Activated naive CD4-positive, alpha-beta T cell treated with anti-CD3 and anti-CD28 coated beads for 36 hours (primary cell): ENCODE measurements at regions of chr11 and their contacts with region 1.

Region 1: DNA sequence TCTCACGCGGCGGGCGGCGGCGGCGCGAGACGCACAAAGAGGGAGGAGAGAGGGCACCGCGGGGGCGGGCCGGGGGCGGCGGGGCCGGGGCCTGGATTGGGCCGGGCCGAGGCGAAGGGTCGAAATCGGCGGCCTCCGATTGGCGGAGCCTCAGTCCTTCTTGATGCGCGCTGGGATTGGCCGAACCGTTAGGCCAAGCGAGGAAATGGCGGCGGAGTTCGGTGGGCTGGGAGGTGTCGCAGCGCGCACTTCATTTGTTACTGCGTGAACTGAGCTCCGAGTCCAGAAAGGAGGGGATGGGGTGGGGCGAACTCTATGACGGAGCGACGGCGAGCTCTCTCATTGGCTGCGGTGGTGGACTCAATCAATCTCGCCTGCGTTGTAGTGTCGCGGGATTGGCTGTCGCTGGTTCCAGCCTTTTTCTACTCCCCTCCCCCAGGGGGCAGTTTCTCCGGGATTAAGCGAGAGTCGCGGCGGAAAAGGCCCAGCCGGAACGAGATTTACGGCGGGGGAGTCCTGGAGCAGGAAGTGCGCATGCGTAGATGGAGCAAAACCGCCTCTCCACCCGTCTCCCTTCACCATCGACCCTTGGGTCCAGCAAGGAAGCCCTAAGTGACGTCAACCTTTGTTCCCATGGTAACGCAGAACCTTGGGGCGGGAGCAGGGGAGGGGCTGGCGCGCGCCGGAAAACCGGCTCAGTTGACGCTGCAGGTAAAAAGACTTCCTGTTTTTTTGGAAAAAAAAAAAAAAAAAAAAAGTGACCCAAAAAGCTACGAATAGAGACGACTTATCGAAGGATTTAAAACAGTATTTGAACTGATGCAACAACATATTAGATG is at the start of gene SF1:
- DNase-seq: peak; percentile 100
- H3K4me3 Mint-ChIP-seq: peak within 1 kb of the TSS; percentile 92
- H3K27ac Mint-ChIP-seq: peak within 1 kb of the TSS; percentile 99
- H3K4me1 Mint-ChIP-seq: peaks cover 52% of the 10 kb centered on the region
- H3K27me3 Mint-ChIP-seq: no peaks in the 10 kb centered on the region
- total RNA-seq, gene SF1: 303 to 320 TPM

Region 2: GRCh38 chr11:64304316-64305072 is 474.2 kb before region 1 on chr11:
- CTCF ChIA-PET with region 1: no interaction called
- intact Hi-C with region 1: loop called (anchors 2 kb)
- DNase-seq: peak; percentile 98
- H3K4me3 Mint-ChIP-seq: peak overlapping the region; percentile 88
- H3K27ac Mint-ChIP-seq: peak overlapping the region; percentile 91
- H3K4me1 Mint-ChIP-seq: peaks cover 39% of the 10 kb centered on the region
- H3K27me3 Mint-ChIP-seq: peaks cover 19% of the 10 kb centered on the region

Region 3: GRCh38 chr11:64762674-64763525 is 15.8 kb before region 1 on chr11:
- CTCF ChIA-PET with region 1: interaction called, 8 read pairs
- intact Hi-C with region 1: loop called (anchors 2 kb)
- DNase-seq: peak; percentile 60
- H3K4me3 Mint-ChIP-seq: no peak overlapping the region
- H3K27ac Mint-ChIP-seq: peak overlapping the region; percentile 83
- H3K4me1 Mint-ChIP-seq: peaks cover 75% of the 10 kb centered on the region
- H3K27me3 Mint-ChIP-seq: no peaks in the 10 kb centered on the region

Region 4: GRCh38 chr11:64878494-64879243 is 99.9 kb after region 1 on chr11 and contains the start of gene EHD1:
- CTCF ChIA-PET with region 1: no interaction called
- intact Hi-C with region 1: loop called (anchors 1 kb)
- DNase-seq: peak; percentile 100
- H3K4me3 Mint-ChIP-seq: peak within 1 kb of the TSS; percentile 93
- H3K27ac Mint-ChIP-seq: peak within 1 kb of the TSS; percentile 96
- H3K4me1 Mint-ChIP-seq: peaks cover 58% of the 10 kb centered on the region
- H3K27me3 Mint-ChIP-seq: no peaks in the 10 kb centered on the region
- total RNA-seq, gene EHD1: 124 to 132 TPM

Region 5: GRCh38 chr11:64935359-64936081 is 156.8 kb after region 1 on chr11 and contains the start of gene GPHA2:
- CTCF ChIA-PET with region 1: no interaction called
- intact Hi-C with region 1: no loop called
- DNase-seq: no peak
- H3K4me3 Mint-ChIP-seq: no peak within 1 kb of the TSS
- H3K27ac Mint-ChIP-seq: no peak within 1 kb of the TSS
- H3K4me1 Mint-ChIP-seq: no peaks in the 10 kb centered on the region
- H3K27me3 Mint-ChIP-seq: no peaks in the 10 kb centered on the region
- total RNA-seq, gene GPHA2: not detected

Region 6: GRCh38 chr11:64971421-64972233 is 192.9 kb after region 1 on chr11 and contains the start of gene MAJIN:
- CTCF ChIA-PET with region 1: no interaction called
- intact Hi-C with region 1: loop called (anchors 1 kb)
- DNase-seq: peak; percentile 89
- H3K4me3 Mint-ChIP-seq: peak within 1 kb of the TSS; percentile 69
- H3K27ac Mint-ChIP-seq: peak within 1 kb of the TSS; percentile 81
- H3K4me1 Mint-ChIP-seq: peaks cover 41% of the 10 kb centered on the region
- H3K27me3 Mint-ChIP-seq: no peaks in the 10 kb centered on the region
- total RNA-seq, gene MAJIN: 0.29 to 0.37 TPM

Region 7: GRCh38 chr11:65261591-65262380 is 483.1 kb after region 1 on chr11 and contains the start of gene POLA2:
- CTCF ChIA-PET with region 1: no interaction called
- intact Hi-C with region 1: loop called (anchors 1 kb)
- DNase-seq: peak; percentile 98
- H3K4me3 Mint-ChIP-seq: peak within 1 kb of the TSS; percentile 93
- H3K27ac Mint-ChIP-seq: peak within 1 kb of the TSS; percentile 94
- H3K4me1 Mint-ChIP-seq: peaks cover 44% of the 10 kb centered on the region
- H3K27me3 Mint-ChIP-seq: no peaks in the 10 kb centered on the region
- total RNA-seq, gene POLA2: 65.1 to 67.0 TPM